Dorsolateral prefrontal cortex (tissue), 120 donors: ENCODE measurements at regions of chr15 and their contacts with region 1.

Region 1: GRCh38 chr15:35067496-35068347 is 17.4 kb downstream of the NANOGP8 start:
- DNase-seq: no peak
- H3K4me3 ChIP-seq: no peak overlapping the region
- H3K27ac ChIP-seq: peak overlapping the region in 1 of 59 donors; percentile 76
- H3K27me3 ChIP-seq: no peaks in the 10 kb centered on the region
- CTCF ChIP-seq: no peak

Region 2: DNA sequence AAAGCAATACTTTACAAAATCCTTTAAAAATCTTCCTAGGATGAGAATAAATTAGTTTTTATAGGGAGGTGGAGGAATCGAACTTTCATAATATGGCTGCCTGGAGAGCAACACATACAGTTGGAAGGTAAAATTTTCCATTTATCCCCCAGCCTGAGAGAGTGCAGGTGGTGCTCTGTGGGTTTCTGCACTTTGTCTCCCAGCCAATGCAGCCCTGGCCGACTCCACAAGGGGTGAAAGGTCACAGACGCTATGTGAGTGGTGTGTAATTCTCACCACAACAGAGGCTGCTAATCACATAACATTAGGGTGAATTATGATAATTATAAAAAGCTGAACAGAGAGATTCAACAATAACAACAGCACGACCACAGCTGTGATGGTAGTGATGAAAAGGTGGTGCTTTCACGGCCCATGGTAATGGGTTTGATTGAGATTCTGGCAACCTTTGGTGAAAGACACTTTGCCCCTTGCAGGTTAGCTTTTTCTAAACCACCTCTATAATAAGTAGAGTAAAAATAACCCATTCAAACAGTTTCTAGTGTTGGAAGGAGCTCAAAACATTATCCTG is 47.5 kb after region 1 on chr15:
- intact Hi-C with region 1: loop called in 1 of 2 experiments (anchors 5 kb)
- DNase-seq: no peak
- H3K4me3 ChIP-seq: no peak overlapping the region
- H3K27ac ChIP-seq: no peak overlapping the region
- H3K27me3 ChIP-seq: no peaks in the 10 kb centered on the region
- CTCF ChIP-seq: no peak

Region 3: GRCh38 chr15:35126236-35126635 is 58.5 kb after region 1 on chr15:
- intact Hi-C with region 1: no loop called
- DNase-seq: no peak
- H3K4me3 ChIP-seq: no peak overlapping the region
- H3K27ac ChIP-seq: no peak overlapping the region
- H3K27me3 ChIP-seq: no peaks in the 10 kb centered on the region
- CTCF ChIP-seq: no peak